B cell (primary cell): ENCODE measurements at regions of chr1 and their contacts with region 1.

Region 1: DNA sequence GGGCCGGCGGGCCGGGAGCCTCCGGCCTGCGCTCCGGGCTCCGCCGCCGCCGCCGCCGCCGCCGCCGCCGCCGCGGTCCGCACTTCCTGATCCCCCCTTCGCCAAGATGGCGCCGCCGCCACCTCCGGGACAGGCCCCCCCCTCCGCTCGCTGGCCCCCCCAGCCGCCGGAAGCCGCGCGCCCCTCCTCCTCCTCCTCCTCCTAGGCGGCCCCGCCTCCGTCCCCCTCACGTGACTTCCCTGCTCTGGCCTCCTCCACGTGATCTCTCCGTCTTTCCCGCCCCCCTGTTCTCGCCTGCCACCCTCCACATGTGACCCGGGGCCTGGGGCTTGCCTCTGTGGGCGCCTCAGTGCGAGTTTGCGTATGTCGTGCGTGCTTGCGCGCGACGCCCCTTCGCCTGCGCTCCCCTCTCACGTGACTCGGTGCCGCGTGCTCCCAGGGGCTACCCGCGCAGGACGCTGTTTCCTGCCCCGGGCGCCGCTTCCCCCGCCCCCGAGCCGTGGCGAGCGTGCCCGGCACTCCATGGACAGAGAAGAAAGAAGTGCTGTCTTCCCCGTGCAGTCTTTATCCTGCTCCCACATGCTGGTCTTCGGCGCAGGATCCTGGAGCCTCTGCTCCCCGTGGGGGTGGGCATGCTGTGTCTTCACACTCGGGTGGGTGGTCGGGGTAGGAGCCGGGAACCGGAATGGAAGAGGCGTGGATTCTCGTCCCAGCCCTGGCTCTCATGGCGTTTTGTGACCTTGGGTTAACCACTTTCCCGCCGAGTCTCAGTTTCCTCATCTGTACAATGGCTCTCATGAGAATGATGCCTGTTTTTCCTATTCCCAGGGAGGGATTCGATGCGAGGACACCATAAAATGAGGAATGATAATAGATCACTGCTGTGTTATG is at the start of gene UBE2Q1:
- DNase-seq: peak; percentile 100
- ATAC-seq: peak; percentile 84
- H3K4me3 ChIP-seq: peak within 1 kb of the TSS; percentile 69 to 90 (median 81)
- H3K4me3 Mint-ChIP-seq: peak within 1 kb of the TSS; percentile 96
- H3K27ac ChIP-seq: peak within 1 kb of the TSS; percentile 85
- H3K27ac Mint-ChIP-seq: peak within 1 kb of the TSS; percentile 95
- H3K4me1 ChIP-seq: peaks cover 18 to 29% of the 10 kb centered on the region in 2 donors
- H3K4me1 Mint-ChIP-seq: peaks cover 33% of the 10 kb centered on the region
- H3K27me3 ChIP-seq: no peaks in the 10 kb centered on the region
- H3K27me3 Mint-ChIP-seq: no peaks in the 10 kb centered on the region
- CTCF ChIP-seq: no peak
- total RNA-seq, gene UBE2Q1: 97.9 and 108 TPM in 2 replicates

Region 2: GRCh38 chr1:153977250-153978240 is 581.3 kb before region 1 on chr1 and contains the start of gene JTB:
- CTCF ChIA-PET with region 1: no interaction called
- POLR2A ChIA-PET with region 1: no interaction called
- intact Hi-C with region 1: loop called (anchors 5 kb)
- DNase-seq: peak; percentile 87
- ATAC-seq: peak; percentile 96
- H3K4me3 ChIP-seq: peak within 1 kb of the TSS; percentile 59 to 96 (median 90)
- H3K4me3 Mint-ChIP-seq: peak within 1 kb of the TSS; percentile 98
- H3K27ac ChIP-seq: peak within 1 kb of the TSS; percentile 55 to 87
- H3K27ac Mint-ChIP-seq: peak within 1 kb of the TSS; percentile 96
- H3K4me1 ChIP-seq: peaks cover 16 to 22% of the 10 kb centered on the region in 2 donors
- H3K4me1 Mint-ChIP-seq: peaks cover 34% of the 10 kb centered on the region
- H3K27me3 ChIP-seq: no peaks in the 10 kb centered on the region
- H3K27me3 Mint-ChIP-seq: no peaks in the 10 kb centered on the region
- CTCF ChIP-seq: no peak
- total RNA-seq, gene JTB: 99.1 and 106 TPM in 2 replicates

Region 3: GRCh38 chr1:154442006-154442740 is 116.6 kb before region 1 on chr1:
- CTCF ChIA-PET with region 1: no interaction called
- POLR2A ChIA-PET with region 1: no interaction called
- intact Hi-C with region 1: no loop called
- DNase-seq: no peak
- ATAC-seq: no peak
- H3K4me3 ChIP-seq: no peak overlapping the region
- H3K4me3 Mint-ChIP-seq: no peak overlapping the region
- H3K27ac ChIP-seq: no peak overlapping the region
- H3K27ac Mint-ChIP-seq: no peak overlapping the region
- H3K4me1 ChIP-seq: peaks cover 0 to 3% of the 10 kb centered on the region in 2 donors
- H3K4me1 Mint-ChIP-seq: peaks cover 13% of the 10 kb centered on the region
- H3K27me3 ChIP-seq: no peaks in the 10 kb centered on the region
- H3K27me3 Mint-ChIP-seq: no peaks in the 10 kb centered on the region
- CTCF ChIP-seq: peak; percentile 25

Region 4: GRCh38 chr1:154546264-154547063 is 12.4 kb before region 1 on chr1:
- CTCF ChIA-PET with region 1: interaction called, 17 read pairs
- POLR2A ChIA-PET with region 1: no interaction called
- intact Hi-C with region 1: no loop called
- DNase-seq: peak; percentile 69
- ATAC-seq: peak; percentile 86
- H3K4me3 ChIP-seq: no peak overlapping the region
- H3K4me3 Mint-ChIP-seq: no peak overlapping the region
- H3K27ac ChIP-seq: no peak overlapping the region
- H3K27ac Mint-ChIP-seq: no peak overlapping the region
- H3K4me1 ChIP-seq: no peaks in the 10 kb centered on the region
- H3K4me1 Mint-ChIP-seq: peaks cover 5% of the 10 kb centered on the region
- H3K27me3 ChIP-seq: peaks cover 0 to 4% (median 0%) of the 10 kb centered on the region in 4 experiments
- H3K27me3 Mint-ChIP-seq: peaks cover 15% of the 10 kb centered on the region
- CTCF ChIP-seq: peak; percentile 83

Region 5: DNA sequence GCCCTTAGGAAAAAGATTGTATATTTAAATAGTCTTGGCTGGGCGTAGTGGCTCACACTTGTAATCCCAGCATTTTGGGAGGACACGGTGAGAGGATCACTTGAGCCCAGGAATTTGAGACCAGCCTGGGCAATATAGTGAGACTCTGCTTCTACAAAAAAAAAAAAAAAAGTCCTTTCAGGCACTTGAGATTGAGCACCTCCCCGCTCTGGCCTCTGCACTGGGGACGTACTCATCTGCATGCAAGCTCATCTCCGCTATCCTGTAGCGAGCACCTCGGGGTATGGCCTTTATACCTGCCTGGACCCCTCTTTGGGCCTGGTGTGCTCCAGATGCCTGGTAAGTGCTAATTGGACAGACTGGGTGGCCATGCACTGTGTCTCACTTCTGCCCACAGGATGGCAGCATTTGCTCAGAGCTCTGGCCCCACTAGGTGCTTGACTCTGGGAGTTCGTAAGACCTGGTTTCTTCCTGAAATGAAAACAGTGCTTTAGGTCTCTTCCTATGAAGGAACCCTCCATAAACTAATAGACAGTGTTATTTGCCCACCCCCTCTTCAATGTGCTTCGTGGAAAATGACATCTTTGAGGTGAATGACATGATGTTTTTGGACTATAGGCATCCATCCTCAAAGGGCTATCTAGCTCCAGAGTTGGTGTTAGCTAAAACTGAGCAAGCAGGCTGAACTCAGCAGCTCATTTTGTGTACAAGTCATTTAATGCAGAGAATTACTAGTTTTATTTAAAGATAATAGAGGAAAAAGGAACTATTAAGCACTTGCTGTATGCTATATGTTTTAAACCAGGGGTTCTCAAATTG is 110.9 kb after region 1 on chr1:
- CTCF ChIA-PET with region 1: interaction called, 8 read pairs
- POLR2A ChIA-PET with region 1: no interaction called
- intact Hi-C with region 1: loop called (anchors 1 kb)
- DNase-seq: peak; percentile 79
- ATAC-seq: peak; percentile 96
- H3K4me3 ChIP-seq: no peak overlapping the region
- H3K4me3 Mint-ChIP-seq: no peak overlapping the region
- H3K27ac ChIP-seq: no peak overlapping the region
- H3K27ac Mint-ChIP-seq: no peak overlapping the region
- H3K4me1 ChIP-seq: peaks cover 0 to 3% of the 10 kb centered on the region in 2 donors
- H3K4me1 Mint-ChIP-seq: no peaks in the 10 kb centered on the region
- H3K27me3 ChIP-seq: no peaks in the 10 kb centered on the region
- H3K27me3 Mint-ChIP-seq: peaks cover 7% of the 10 kb centered on the region
- CTCF ChIP-seq: peak; percentile 66

Region 6: GRCh38 chr1:154936555-154937084 is 377.8 kb after region 1 on chr1 and contains the start of gene PMVK:
- CTCF ChIA-PET with region 1: interaction called, 14 read pairs
- POLR2A ChIA-PET with region 1: interaction called, 5 read pairs
- intact Hi-C with region 1: loop called (anchors 1 kb)
- DNase-seq: peak; percentile 99
- ATAC-seq: peak; percentile 89
- H3K4me3 ChIP-seq: peak within 1 kb of the TSS; percentile 76 to 90 (median 80)
- H3K4me3 Mint-ChIP-seq: peak within 1 kb of the TSS; percentile 97
- H3K27ac ChIP-seq: peak within 1 kb of the TSS; percentile 98
- H3K27ac Mint-ChIP-seq: peak within 1 kb of the TSS; percentile 100
- H3K4me1 ChIP-seq: peaks cover 32 to 50% of the 10 kb centered on the region in 2 donors
- H3K4me1 Mint-ChIP-seq: peaks cover 51% of the 10 kb centered on the region
- H3K27me3 ChIP-seq: no peaks in the 10 kb centered on the region
- H3K27me3 Mint-ChIP-seq: no peaks in the 10 kb centered on the region
- CTCF ChIP-seq: peak; percentile 40
- total RNA-seq, gene PMVK: 15.0 TPM in 2 replicates

Region 7: DNA sequence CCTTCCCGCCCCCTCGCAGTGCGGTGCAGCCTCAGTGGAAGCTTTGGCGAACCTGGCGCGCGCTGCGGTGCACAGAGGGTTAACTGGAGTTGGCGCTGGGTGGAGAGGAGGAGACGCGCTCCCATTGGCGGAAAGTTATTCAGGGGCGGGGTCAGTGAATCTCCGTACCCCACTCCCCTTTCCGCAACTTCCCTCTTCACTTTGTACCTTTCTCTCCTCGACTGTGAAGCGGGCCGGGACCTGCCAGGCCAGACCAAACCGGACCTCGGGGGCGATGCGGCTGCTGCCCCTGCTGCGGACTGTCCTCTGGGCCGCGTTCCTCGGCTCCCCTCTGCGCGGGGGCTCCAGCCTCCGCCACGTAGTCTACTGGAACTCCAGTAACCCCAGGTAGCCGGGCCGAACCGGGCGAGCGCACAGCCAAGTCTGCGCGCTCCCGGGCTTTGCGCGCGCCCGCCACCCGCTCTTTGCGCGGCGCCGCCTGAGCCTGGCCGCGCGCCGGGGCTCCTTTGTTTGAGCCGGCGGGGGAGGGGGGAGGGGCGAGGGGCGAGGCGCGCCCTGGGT is 504.8 kb after region 1 on chr1 and contains the start of gene EFNA4:
- CTCF ChIA-PET with region 1: interaction called, 34 read pairs
- POLR2A ChIA-PET with region 1: no interaction called
- intact Hi-C with region 1: loop called (anchors 1 kb)
- DNase-seq: peak; percentile 94
- ATAC-seq: peak; percentile 84
- H3K4me3 ChIP-seq: peak within 1 kb of the TSS; percentile 68 to 78 (median 74)
- H3K4me3 Mint-ChIP-seq: peak within 1 kb of the TSS; percentile 94
- H3K27ac ChIP-seq: peak within 1 kb of the TSS; percentile 25 to 55
- H3K27ac Mint-ChIP-seq: peak within 1 kb of the TSS; percentile 87
- H3K4me1 ChIP-seq: peaks cover 27 to 50% of the 10 kb centered on the region in 2 donors
- H3K4me1 Mint-ChIP-seq: peaks cover 47% of the 10 kb centered on the region
- H3K27me3 ChIP-seq: peaks cover 0 to 3% (median 0%) of the 10 kb centered on the region in 4 experiments
- H3K27me3 Mint-ChIP-seq: no peaks in the 10 kb centered on the region
- CTCF ChIP-seq: no peak
- total RNA-seq, gene EFNA4: 8.4 and 9.9 TPM in 2 replicates